ENCODE measurements at regions of chr5 and their contacts with region 1.

Region 1: DNA sequence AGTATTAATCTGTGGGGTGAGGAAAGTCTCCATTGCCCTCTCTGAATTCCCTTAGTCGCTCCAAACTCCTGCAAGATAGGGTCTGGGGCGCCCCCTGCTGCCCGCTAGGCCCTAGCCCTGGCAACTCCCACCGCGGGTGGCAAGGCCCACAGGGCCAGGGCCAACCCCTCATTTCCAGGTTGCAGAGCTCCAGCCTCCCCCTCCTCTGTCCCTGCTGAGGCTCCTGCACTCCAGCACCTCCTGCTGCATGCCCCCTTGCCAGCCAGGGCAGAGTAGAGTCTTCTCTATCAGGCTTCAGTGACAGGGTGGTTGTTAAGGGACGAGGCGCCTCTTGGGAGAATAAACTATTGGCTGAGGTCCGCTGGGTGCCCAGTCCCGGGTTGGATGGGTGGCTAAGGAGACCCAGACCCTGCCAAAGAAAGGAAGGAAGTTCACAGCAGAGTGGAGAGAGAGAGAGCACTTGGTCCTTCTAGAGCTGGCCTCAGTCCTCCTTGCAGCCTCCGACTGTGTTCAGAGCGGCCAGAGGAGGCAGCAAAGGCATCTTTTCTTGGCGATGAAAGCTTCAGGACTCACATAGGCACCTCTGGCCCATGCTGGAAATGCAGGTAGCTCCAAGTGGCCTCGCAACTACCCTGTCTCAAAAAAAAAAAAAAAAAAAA is 45.6 kb downstream of the SAR1B start:
- DNase-seq: peak; percentile 56 to 88 (median 76)
- ATAC-seq: peak; percentile 93
- H3K4me3 ChIP-seq: peak overlapping the region; percentile 11
- H3K4me3 Mint-ChIP-seq: peak overlapping the region in 8 of 10 donors; percentile 9 to 63 (median 25)
- H3K27ac ChIP-seq: no peak overlapping the region
- H3K27ac Mint-ChIP-seq: peak overlapping the region; percentile 22 to 84 (median 54)
- H3K4me1 ChIP-seq: peaks cover 4% of the 10 kb centered on the region in 2 donors
- H3K4me1 Mint-ChIP-seq: peaks cover 0 to 17% (median 9%) of the 10 kb centered on the region in 7 donors
- H3K27me3 ChIP-seq: no peaks in the 10 kb centered on the region
- H3K27me3 Mint-ChIP-seq: no peaks in the 10 kb centered on the region

Region 2: DNA sequence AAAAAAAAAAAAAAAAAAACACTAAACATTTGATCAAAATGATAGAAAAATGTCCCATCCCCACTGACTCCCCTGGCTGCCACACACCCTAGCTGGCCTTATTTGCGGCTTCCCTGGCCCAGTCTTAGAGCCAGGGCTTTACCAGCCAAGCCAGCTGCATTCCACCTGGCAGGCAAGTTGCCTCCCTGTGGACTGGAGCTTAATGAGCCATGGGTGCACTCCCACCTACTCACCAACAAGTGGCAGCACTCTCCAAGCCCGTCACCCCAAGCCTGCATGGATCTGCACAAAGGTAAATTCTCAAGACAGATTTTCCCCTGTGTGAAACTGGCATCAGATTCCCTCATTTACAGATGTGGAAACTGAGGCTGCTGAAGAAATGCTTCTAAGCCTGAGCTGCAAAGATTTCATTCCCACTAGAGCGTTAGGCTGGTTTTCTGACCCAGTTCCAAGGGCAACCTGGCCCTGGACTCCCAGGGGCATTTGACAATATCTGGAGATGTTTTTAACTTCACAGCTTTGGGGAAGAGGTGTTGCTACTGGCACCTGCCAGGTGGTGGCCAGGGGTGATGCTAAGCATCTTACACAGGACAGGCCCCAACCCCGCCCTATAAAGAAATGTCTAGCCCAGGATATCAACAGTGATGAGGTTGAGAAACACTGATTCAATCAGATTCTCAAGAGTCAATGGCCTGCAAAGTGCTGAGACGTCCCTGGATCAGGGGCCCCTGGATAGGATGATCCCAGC is 560.3 kb before region 1 on chr5:
- CTCF ChIA-PET with region 1: no interaction called
- POLR2A ChIA-PET with region 1: no interaction called
- intact Hi-C with region 1: loop called in 1 of 2 experiments (anchors 10 kb)
- DNase-seq: peak in 8 of 9 donors; percentile 41 to 73 (median 62)
- ATAC-seq: peak; percentile 96
- H3K4me3 ChIP-seq: no peak overlapping the region
- H3K4me3 Mint-ChIP-seq: no peak overlapping the region
- H3K27ac ChIP-seq: no peak overlapping the region
- H3K27ac Mint-ChIP-seq: peak overlapping the region in 2 of 9 donors; percentile 36 to 52
- H3K4me1 ChIP-seq: no peaks in the 10 kb centered on the region
- H3K4me1 Mint-ChIP-seq: peaks cover 1 to 6% (median 4%) of the 10 kb centered on the region in 7 donors
- H3K27me3 ChIP-seq: no peaks in the 10 kb centered on the region
- H3K27me3 Mint-ChIP-seq: peaks cover 0 to 17% (median 0%) of the 10 kb centered on the region in 5 donors

Region 3: GRCh38 chr5:134184155-134185135 is 402.6 kb before region 1 on chr5:
- CTCF ChIA-PET with region 1: interaction called, 3 read pairs
- POLR2A ChIA-PET with region 1: no interaction called
- intact Hi-C with region 1: loop called (anchors 1 to 2 kb)
- DNase-seq: peak; percentile 52 to 83 (median 65)
- ATAC-seq: peak; percentile 94
- H3K4me3 ChIP-seq: no peak overlapping the region
- H3K4me3 Mint-ChIP-seq: no peak overlapping the region
- H3K27ac ChIP-seq: no peak overlapping the region
- H3K27ac Mint-ChIP-seq: peak overlapping the region in 1 of 9 donors; percentile 16
- H3K4me1 ChIP-seq: no peaks in the 10 kb centered on the region
- H3K4me1 Mint-ChIP-seq: peaks cover 0 to 5% (median 0%) of the 10 kb centered on the region in 7 donors
- H3K27me3 ChIP-seq: no peaks in the 10 kb centered on the region
- H3K27me3 Mint-ChIP-seq: peaks cover 0 to 4% (median 0%) of the 10 kb centered on the region in 5 donors

Region 4: GRCh38 chr5:134296213-134296612 is 290.8 kb before region 1 on chr5:
- CTCF ChIA-PET with region 1: interaction called, 18 read pairs
- POLR2A ChIA-PET with region 1: no interaction called
- intact Hi-C with region 1: no loop called
- DNase-seq: no peak
- ATAC-seq: no peak
- H3K4me3 ChIP-seq: no peak overlapping the region
- H3K4me3 Mint-ChIP-seq: no peak overlapping the region
- H3K27ac ChIP-seq: no peak overlapping the region
- H3K27ac Mint-ChIP-seq: no peak overlapping the region
- H3K4me1 ChIP-seq: no peaks in the 10 kb centered on the region
- H3K4me1 Mint-ChIP-seq: no peaks in the 10 kb centered on the region
- H3K27me3 ChIP-seq: peaks cover 0 to 3% of the 10 kb centered on the region in 2 donors
- H3K27me3 Mint-ChIP-seq: peaks cover 0 to 21% (median 0%) of the 10 kb centered on the region in 5 donors

Region 5: DNA sequence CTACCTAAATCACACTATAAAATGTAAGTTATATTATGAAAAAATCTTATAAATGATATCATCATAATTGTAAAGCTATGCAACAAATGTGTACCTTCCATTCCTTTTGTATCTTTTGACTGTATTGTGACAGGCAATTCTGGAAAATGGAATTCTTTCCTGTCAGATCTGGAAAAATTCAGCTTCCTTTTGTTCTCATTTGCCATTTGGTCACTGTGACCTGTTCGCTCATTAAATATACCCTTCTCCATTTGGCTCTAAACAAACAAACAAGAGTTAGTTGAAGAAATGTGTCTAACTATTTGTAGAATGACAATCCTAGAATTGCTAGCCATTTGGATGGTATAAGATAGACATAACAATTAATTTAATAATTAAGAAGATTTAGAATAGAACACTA is 282.7 kb before region 1 on chr5:
- CTCF ChIA-PET with region 1: interaction called, 18 read pairs
- POLR2A ChIA-PET with region 1: interaction called, 3 read pairs
- intact Hi-C with region 1: loop called (anchors 1 kb)
- DNase-seq: no peak
- ATAC-seq: no peak
- H3K4me3 ChIP-seq: no peak overlapping the region
- H3K4me3 Mint-ChIP-seq: no peak overlapping the region
- H3K27ac ChIP-seq: no peak overlapping the region
- H3K27ac Mint-ChIP-seq: no peak overlapping the region
- H3K4me1 ChIP-seq: no peaks in the 10 kb centered on the region
- H3K4me1 Mint-ChIP-seq: peaks cover 0 to 5% (median 0%) of the 10 kb centered on the region in 7 donors
- H3K27me3 ChIP-seq: no peaks in the 10 kb centered on the region
- H3K27me3 Mint-ChIP-seq: peaks cover 0 to 8% (median 0%) of the 10 kb centered on the region in 5 donors

Region 6: GRCh38 chr5:134609232-134609851 is 22.3 kb after region 1 on chr5:
- CTCF ChIA-PET with region 1: no interaction called
- POLR2A ChIA-PET with region 1: no interaction called
- intact Hi-C with region 1: loop called in 1 of 2 experiments (anchors 1 kb)
- DNase-seq: no peak
- ATAC-seq: no peak
- H3K4me3 ChIP-seq: no peak overlapping the region
- H3K4me3 Mint-ChIP-seq: peak overlapping the region in 1 of 10 donors; percentile 70
- H3K27ac ChIP-seq: no peak overlapping the region
- H3K27ac Mint-ChIP-seq: peak overlapping the region in 8 of 9 donors; percentile 11 to 94 (median 50)
- H3K4me1 ChIP-seq: no peaks in the 10 kb centered on the region
- H3K4me1 Mint-ChIP-seq: peaks cover 0 to 39% (median 8%) of the 10 kb centered on the region in 7 donors
- H3K27me3 ChIP-seq: no peaks in the 10 kb centered on the region
- H3K27me3 Mint-ChIP-seq: no peaks in the 10 kb centered on the region

Region 7: DNA sequence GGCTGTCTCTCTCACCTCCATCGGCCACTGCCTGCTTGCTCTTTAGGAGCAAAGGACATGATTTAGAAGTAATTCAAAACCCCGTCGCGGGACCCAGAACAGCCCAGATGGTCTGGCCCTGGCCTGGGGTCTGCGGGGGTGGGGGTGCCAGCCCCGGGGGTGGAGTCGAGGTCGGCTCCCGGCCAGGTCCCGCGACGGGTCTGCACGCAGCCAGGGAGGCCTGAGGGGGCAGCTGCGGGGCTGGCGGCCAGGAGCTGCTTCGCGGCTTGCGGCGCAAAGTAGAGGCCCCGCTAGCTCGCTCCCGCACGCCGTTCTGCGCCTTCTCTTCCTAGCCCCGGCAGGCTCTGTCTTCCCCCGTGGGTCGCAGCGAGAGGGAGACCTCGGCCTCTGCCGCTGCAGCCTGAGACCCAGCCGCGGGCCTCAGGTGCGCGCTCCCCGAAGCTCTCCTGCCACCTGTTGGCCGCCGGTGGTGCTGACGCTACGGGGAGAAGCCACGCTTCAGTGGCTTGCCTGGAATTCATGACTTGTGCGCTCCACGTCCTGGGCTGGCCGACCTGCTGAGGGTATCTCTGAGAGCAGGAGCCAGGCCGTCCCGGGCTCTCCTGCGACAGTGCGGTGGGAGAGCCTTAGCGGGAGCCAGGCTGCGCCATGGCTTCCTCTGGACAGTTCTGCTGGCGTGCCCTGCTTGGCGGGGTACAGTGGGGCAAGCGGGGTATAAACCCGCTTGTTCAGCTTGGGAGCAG is 604.3 kb after region 1 on chr5:
- CTCF ChIA-PET with region 1: no interaction called
- POLR2A ChIA-PET with region 1: no interaction called
- intact Hi-C with region 1: no loop called
- DNase-seq: peak; percentile 44 to 77 (median 68)
- ATAC-seq: peak; percentile 95
- H3K4me3 ChIP-seq: peak overlapping the region; percentile 44
- H3K4me3 Mint-ChIP-seq: peak overlapping the region; percentile 75 to 89 (median 80)
- H3K27ac ChIP-seq: no peak overlapping the region
- H3K27ac Mint-ChIP-seq: no peak overlapping the region
- H3K4me1 ChIP-seq: peaks cover 0 to 7% of the 10 kb centered on the region in 2 donors
- H3K4me1 Mint-ChIP-seq: peaks cover 0 to 8% (median 2%) of the 10 kb centered on the region in 7 donors
- H3K27me3 ChIP-seq: no peaks in the 10 kb centered on the region
- H3K27me3 Mint-ChIP-seq: peaks cover 19 to 76% (median 25%) of the 10 kb centered on the region in 5 donors